BJ (cell line): ENCODE measurements at regions of chr16 and their contacts with region 1.

Region 1: DNA sequence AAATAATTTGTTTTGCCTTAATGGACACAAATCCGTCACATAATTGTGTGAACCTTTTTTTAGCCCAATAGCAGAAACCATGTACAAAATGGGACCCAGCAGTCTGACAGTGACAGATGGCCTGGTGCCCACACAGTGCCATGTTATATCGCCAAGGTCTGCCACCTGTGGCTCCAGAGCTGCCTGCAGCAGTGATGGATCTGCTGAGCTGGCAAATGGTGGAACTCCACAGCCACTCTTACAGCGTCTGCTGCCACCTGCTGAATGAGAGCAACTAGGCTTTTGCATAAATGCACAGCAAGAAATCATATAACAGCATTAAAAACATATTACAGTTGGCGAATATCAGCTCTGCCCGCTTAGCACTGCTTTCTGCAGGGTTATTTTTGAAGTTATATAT is 59.4 kb downstream of the NUP93 start:
- DNase-seq: no peak
- H3K4me3 ChIP-seq: no peak overlapping the region
- H3K27me3 ChIP-seq: no peaks in the 10 kb centered on the region
- CTCF ChIP-seq: peak; percentile 58

Region 2: DNA sequence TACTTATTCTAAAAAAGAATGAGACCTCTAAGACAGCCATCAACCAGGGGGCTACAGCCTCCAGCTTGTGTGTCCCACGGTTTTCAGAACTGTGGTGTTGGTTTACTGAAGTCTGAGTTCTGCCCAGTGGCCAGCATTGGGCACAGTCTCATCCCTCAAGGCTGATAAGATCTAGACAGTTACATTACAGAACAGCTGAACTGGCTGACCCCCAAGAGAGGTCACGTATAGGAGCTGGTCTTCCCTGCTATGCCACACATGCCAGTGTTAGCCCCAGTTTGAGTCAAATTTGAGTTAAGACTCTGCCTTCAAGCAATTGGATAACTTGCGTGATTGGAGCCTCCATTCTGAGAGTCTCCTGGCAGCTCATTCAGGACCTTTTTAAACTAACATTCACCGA is 74.2 kb before region 1 on chr16:
- CTCF ChIA-PET with region 1: no interaction called
- POLR2A ChIA-PET with region 1: no interaction called
- DNase-seq: no peak
- H3K4me3 ChIP-seq: no peak overlapping the region
- H3K27me3 ChIP-seq: peaks cover 3% of the 10 kb centered on the region
- CTCF ChIP-seq: no peak

Region 3: GRCh38 chr16:56729735-56730662 is 59.4 kb before region 1 on chr16 and contains the start of gene NUP93:
- CTCF ChIA-PET with region 1: no interaction called
- POLR2A ChIA-PET with region 1: no interaction called
- DNase-seq: peak; percentile 55
- H3K4me3 ChIP-seq: peak within 1 kb of the TSS; percentile 98
- H3K27me3 ChIP-seq: no peaks in the 10 kb centered on the region
- CTCF ChIP-seq: no peak
- polyA plus RNA-seq, gene NUP93: 51.8 and 61.2 TPM in 2 replicates

Region 4: DNA sequence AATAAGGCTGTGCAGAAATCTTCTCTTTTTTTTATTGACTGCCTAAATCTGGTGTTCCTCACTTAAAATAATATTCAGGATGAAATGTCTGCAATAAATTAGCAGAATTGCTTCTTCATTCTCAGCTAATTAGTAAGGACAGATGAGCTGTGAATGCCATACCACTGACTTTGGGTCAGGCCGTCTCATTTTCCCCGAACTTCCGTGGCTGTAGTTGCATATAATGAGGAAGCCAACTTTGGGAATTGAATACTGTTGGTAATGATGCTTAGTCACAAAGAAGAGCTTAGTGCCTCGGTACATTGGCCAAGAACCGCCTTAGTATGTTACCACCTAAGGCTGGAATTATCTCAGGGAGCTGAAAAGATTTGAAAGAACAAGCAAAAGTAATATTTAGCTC is 11.9 kb before region 1 on chr16:
- CTCF ChIA-PET with region 1: interaction called, 14 read pairs
- POLR2A ChIA-PET with region 1: interaction called, 8 read pairs
- DNase-seq: no peak
- H3K4me3 ChIP-seq: no peak overlapping the region
- H3K27me3 ChIP-seq: no peaks in the 10 kb centered on the region
- CTCF ChIP-seq: no peak

Region 5: GRCh38 chr16:56801762-56802161 is 12.4 kb after region 1 on chr16:
- CTCF ChIA-PET with region 1: interaction called, 14 read pairs
- POLR2A ChIA-PET with region 1: no interaction called
- DNase-seq: no peak
- H3K4me3 ChIP-seq: no peak overlapping the region
- H3K27me3 ChIP-seq: no peaks in the 10 kb centered on the region
- CTCF ChIP-seq: no peak

Region 6: DNA sequence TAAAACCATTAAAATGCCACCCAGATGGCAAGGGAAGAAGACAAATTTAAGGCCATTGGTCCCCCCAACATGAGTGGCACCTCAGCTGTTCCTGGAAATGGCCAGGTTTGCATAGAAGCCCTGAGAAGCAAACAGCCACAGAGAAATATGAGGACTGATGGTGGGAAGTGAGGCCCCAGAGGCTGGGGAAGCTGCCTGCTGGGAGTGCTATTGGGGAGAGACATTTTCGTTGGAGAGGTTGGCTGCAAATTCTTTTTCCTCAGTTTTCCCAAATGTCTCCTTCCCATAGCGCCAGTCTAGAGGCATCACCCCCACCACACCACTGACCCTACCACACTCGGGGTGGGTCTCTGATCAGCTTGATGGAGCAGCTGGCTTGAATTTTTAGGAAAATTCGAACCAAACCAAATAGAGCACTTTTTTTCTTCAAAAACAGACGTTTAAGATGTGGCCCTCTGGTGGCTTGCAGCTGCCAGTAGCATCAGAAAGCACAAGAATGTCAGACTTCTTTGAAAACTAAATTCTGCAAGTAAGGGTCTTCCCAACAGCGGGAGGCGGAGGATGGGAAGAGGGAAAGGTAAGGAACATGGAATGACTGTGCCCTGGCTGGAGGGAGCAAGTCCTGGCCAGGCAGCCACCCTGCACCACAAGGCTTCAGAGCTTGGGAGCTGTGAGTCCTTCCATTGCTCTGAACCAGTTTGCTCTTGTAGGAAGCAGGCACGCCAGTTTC is 62.5 kb after region 1 on chr16:
- CTCF ChIA-PET with region 1: interaction called, 135 read pairs
- POLR2A ChIA-PET with region 1: no interaction called
- DNase-seq: no peak
- H3K4me3 ChIP-seq: no peak overlapping the region
- H3K27me3 ChIP-seq: no peaks in the 10 kb centered on the region
- CTCF ChIP-seq: peak; percentile 66

Region 7: GRCh38 chr16:56950881-56951771 is 161.8 kb after region 1 on chr16:
- CTCF ChIA-PET with region 1: interaction called, 29 read pairs
- POLR2A ChIA-PET with region 1: no interaction called
- DNase-seq: no peak
- H3K4me3 ChIP-seq: no peak overlapping the region
- H3K27me3 ChIP-seq: no peaks in the 10 kb centered on the region
- CTCF ChIP-seq: peak; percentile 86